SK-N-SH (cell line): ENCODE measurements at regions of chr14 and their contacts with region 1.

Region 1: GRCh38 chr14:92880869-92881289 is 42.1 kb upstream of the CHGA start:
- DNase-seq: peak; percentile 63
- H3K4me3 ChIP-seq: no peak overlapping the region; a peak in 1 of 4 replicates
- H3K27ac ChIP-seq: peak overlapping the region in 1 of 2 experiments; percentile 19; a peak in 1 of 4 replicates
- H3K4me1 ChIP-seq: peaks cover 0 to 35% of the 10 kb centered on the region in 2 experiments; a peak in 1 of 4 replicates
- H3K27me3 ChIP-seq: peaks cover 22% of the 10 kb centered on the region; the same call in 1 of the 2 replicates
- CTCF ChIP-seq: no peak
- EP300 ChIP-seq: no peak
- RAD21 ChIP-seq: peak; percentile 88

Region 2: GRCh38 chr14:92914087-92914656 is 33.3 kb after region 1 on chr14:
- CTCF ChIA-PET with region 1: interaction called, 27 read pairs
- POLR2A ChIA-PET with region 1: interaction called, 79 read pairs
- DNase-seq: no peak
- H3K4me3 ChIP-seq: no peak overlapping the region
- H3K27ac ChIP-seq: no peak overlapping the region
- H3K4me1 ChIP-seq: peaks cover 0 to 43% of the 10 kb centered on the region in 2 experiments; a peak in 2 of 4 replicates
- H3K27me3 ChIP-seq: peaks cover 5% of the 10 kb centered on the region; the same call in 1 of the 2 replicates
- CTCF ChIP-seq: no peak
- EP300 ChIP-seq: no peak
- RAD21 ChIP-seq: no peak

Region 3: GRCh38 chr14:92930737-92931602 is 50.1 kb after region 1 on chr14:
- CTCF ChIA-PET with region 1: interaction called, 56 read pairs
- POLR2A ChIA-PET with region 1: interaction called, 288 read pairs
- DNase-seq: no peak
- H3K4me3 ChIP-seq: no peak overlapping the region
- H3K27ac ChIP-seq: peak overlapping the region in 1 of 2 experiments; percentile 35; a peak in 1 of 4 replicates
- H3K4me1 ChIP-seq: peaks cover 0 to 85% of the 10 kb centered on the region in 2 experiments; a peak in 2 of 4 replicates
- H3K27me3 ChIP-seq: no peaks in the 10 kb centered on the region; the same call in 1 of the 2 replicates
- CTCF ChIP-seq: no peak
- EP300 ChIP-seq: no peak
- RAD21 ChIP-seq: no peak

Region 4: DNA sequence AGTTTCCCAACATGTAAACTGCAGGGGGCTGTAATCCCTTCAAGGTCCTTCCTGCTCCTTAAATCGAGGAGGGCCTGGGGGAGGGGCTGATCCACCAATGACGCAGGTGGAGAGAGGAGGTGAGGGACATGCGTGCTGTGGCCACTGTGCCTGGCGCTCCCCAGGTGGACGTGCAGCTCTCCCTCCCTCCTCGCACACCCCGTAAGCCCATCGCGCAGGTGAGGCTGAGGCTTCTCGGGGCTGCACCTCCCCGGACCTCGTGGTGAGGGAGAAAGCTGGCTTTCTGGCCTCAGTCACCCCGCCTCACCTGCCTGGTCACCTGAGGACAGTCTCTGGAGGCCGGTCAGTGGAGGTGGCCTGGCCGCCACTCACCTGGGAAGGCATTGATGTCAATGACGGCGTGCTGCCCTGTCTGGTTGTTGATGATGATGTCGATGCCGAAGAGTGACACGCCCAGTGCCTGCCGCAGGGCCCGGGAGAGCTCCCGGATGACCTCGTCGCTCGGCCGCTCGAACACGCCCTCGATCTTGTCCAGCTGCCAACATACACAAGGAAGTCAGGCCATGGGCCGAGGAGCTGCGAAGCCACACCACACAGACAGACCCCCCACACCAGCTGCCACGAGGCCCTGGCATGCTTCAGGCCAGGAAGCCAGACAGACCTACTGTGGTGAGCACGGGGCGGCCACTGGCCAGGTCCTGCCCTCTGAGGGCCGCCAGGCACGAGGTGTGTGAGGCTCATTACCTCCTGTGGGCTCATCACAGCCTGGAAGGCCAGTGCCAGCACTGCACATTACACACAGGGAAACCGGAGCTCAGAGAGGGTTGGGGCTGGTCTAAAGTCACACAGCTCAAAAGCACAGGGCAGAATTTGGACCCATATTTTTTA is 65.3 kb after region 1 on chr14:
- CTCF ChIA-PET with region 1: interaction called, 32 read pairs
- POLR2A ChIA-PET with region 1: interaction called, 4 read pairs
- DNase-seq: peak; percentile 62
- H3K4me3 ChIP-seq: no peak overlapping the region
- H3K27ac ChIP-seq: peak overlapping the region in 1 of 2 experiments; percentile 78; a peak in 2 of 4 replicates
- H3K4me1 ChIP-seq: peaks cover 0 to 34% of the 10 kb centered on the region in 2 experiments; a peak in 1 of 4 replicates
- H3K27me3 ChIP-seq: no peaks in the 10 kb centered on the region
- CTCF ChIP-seq: no peak
- EP300 ChIP-seq: no peak
- RAD21 ChIP-seq: no peak

Region 5: GRCh38 chr14:93137864-93138263 is 257.0 kb after region 1 on chr14:
- CTCF ChIA-PET with region 1: interaction called, 12 read pairs
- POLR2A ChIA-PET with region 1: no interaction called
- DNase-seq: peak; percentile 46
- H3K4me3 ChIP-seq: no peak overlapping the region
- H3K27ac ChIP-seq: no peak overlapping the region
- H3K4me1 ChIP-seq: no peaks in the 10 kb centered on the region; a peak in 1 of 4 replicates
- H3K27me3 ChIP-seq: no peaks in the 10 kb centered on the region
- CTCF ChIP-seq: no peak
- EP300 ChIP-seq: no peak
- RAD21 ChIP-seq: no peak